ENCODE measurements at regions of chrX and their contacts with region 1.

Region 1: GRCh38 chrX:1453951-1454785 is 1.5 kb upstream of the ASMTL start:
- DNase-seq: peak; percentile 91
- H3K4me3 ChIP-seq: peak overlapping the region; percentile 38 to 86 (median 64)
- H3K27ac ChIP-seq: peak overlapping the region; percentile 91 to 97 (median 96)
- H3K4me1 ChIP-seq: peaks cover 0 to 33% (median 27%) of the 10 kb centered on the region in 4 donors
- H3K27me3 ChIP-seq: no peaks in the 10 kb centered on the region
- CTCF ChIP-seq: peak; percentile 84 to 98 (median 93)
- EP300 ChIP-seq: no peak
- POLR2A ChIP-seq: no peak

Region 2: DNA sequence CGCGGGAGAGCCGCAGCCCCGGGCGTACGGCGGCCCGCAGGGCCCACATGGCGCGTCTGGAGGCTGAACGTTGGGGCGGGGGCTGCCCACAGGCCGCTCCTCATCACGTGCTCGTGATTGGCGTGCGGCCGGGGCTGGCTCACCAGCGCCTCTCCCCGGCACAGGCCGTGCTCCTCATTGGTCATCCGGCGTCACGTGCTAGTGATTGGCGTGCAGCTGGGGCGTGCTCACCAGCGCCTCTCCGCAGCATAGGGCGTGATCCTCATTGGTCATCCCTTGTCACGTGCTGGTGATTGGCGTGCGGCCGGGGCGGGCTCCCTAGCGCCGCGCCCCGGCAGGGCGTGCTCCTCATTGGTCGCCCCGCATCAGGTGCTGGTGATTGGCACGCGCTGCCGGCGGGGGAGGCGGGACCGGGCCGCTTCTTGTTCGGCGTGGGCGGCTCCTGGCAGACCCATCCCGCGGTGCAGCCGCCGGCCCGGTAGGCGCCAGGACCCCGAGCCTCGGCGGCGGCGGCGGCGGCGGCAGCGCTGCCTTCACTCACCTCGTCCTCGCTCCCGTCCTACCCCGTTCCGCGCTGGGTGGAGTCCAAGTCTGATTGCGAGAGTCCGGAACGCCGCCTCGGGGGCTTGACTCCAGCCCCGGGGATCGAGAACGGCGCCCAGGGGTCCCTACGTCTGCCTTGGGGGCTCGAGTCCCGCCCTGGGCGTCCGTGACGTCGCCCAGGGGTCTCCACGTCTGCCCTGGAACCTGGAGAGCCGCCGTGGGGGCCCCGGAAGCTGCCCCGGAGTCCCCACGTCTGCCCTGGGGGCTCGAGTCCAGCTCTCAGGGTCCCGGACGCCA is 1135.2 kb before region 1 on chrX and contains the start of gene GTPBP6:
- intact Hi-C with region 1: loop called (anchors 5 kb)
- DNase-seq: peak; percentile 100
- H3K4me3 ChIP-seq: peak within 1 kb of the TSS; percentile 71 to 91 (median 83)
- H3K27ac ChIP-seq: peak within 1 kb of the TSS; percentile 90 to 98 (median 96)
- H3K4me1 ChIP-seq: peaks cover 0 to 38% (median 27%) of the 10 kb centered on the region in 4 donors
- H3K27me3 ChIP-seq: peaks cover 2 to 14% (median 13%) of the 10 kb centered on the region in 3 donors
- CTCF ChIP-seq: no peak
- EP300 ChIP-seq: no peak
- POLR2A ChIP-seq: peak; percentile 20 to 30
- total RNA-seq, gene GTPBP6: 22.4 to 40.3 (median 30.9) TPM

Region 3: DNA sequence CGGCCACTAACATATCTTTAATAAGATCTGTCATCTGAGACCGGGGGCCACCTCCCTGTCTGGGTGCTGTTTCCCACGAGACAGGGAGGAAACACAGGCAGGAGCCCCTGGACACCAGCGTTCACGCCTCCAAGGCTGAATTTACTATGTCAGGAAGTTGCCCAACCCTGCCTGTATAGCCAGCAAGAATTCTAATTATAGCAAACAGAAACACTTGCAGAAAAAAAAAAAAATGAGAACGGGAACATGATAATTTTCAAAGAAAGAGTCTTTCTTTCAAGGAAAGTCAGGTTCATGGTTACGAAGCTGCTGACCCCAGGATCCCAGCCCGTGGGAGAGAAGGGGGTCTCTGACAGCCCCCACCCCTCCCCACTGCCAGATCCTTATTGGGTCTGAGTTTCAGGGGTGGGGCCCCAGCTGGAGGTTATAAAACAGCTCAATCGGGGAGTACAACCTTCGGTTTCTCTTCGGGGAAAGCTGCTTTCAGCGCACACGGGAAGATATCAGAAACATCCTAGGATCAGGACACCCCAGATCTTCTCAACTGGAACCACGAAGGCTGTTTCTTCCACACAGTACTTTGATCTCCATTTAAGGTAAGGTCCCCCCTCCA is 117.7 kb before region 1 on chrX and contains the start of gene IL3RA:
- intact Hi-C with region 1: no loop called
- DNase-seq: peak; percentile 78
- H3K4me3 ChIP-seq: peak within 1 kb of the TSS; percentile 34 to 60 (median 51)
- H3K27ac ChIP-seq: peak within 1 kb of the TSS; percentile 63 to 76 (median 73)
- H3K4me1 ChIP-seq: no peaks in the 10 kb centered on the region
- H3K27me3 ChIP-seq: no peaks in the 10 kb centered on the region
- CTCF ChIP-seq: no peak
- EP300 ChIP-seq: peak in 1 of 4 donors; percentile 18
- POLR2A ChIP-seq: no peak
- total RNA-seq, gene IL3RA: 2.8 to 8.3 (median 6.2) TPM

Region 4: GRCh38 chrX:1391707-1392375 is 62.3 kb before region 1 on chrX and contains the start of gene SLC25A6:
- intact Hi-C with region 1: loop called (anchors 1 kb)
- DNase-seq: peak; percentile 99
- H3K4me3 ChIP-seq: peak within 1 kb of the TSS; percentile 81 to 100 (median 98)
- H3K27ac ChIP-seq: peak within 1 kb of the TSS; percentile 97 to 100 (median 99)
- H3K4me1 ChIP-seq: peaks cover 0 to 63% (median 61%) of the 10 kb centered on the region in 4 donors
- H3K27me3 ChIP-seq: no peaks in the 10 kb centered on the region
- CTCF ChIP-seq: peak in 1 of 4 experiments; percentile 25
- EP300 ChIP-seq: no peak
- POLR2A ChIP-seq: peak; percentile 79 to 90
- total RNA-seq, gene SLC25A6: 329 to 493 (median 469) TPM

Region 5: DNA sequence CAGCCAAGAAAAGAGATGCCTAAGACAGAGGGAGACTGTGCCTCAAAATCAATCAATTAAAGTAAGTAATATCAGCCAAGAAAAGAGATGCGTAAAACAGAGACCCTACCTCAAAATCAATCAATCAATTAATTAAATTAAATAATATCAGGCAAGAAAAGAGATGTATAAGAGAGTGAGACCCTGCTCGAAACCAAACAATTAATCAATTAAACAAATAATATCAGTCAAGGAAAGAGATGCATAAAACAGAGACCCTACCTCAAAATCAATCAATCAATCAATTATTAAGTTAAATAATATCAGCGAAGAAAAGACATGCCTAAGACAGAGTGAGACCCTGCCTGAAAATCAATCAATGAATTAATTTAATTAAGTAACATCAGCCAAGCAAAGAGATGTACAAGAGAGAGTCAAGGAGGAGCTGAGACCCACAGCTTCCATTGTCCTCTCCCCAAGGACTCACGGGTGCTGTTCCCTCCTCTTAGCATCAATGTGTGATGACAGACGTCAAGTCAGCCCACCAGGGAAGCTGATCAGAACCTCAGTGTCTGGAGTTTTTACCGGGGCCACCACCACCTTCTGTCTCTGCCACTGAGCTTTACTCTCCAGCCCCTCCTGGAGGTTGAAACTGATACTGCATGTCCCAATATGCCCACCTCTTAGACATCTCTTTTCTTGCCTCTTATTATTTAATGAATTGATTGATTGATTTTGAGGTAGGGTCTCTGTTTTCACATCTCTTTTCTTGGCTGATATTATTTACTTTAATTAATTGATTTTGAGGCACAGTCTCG is 126.8 kb after region 1 on chrX:
- intact Hi-C with region 1: no loop called
- DNase-seq: no peak
- H3K4me3 ChIP-seq: no peak overlapping the region
- H3K27ac ChIP-seq: no peak overlapping the region
- H3K4me1 ChIP-seq: no peaks in the 10 kb centered on the region
- H3K27me3 ChIP-seq: peaks cover 0 to 8% (median 0%) of the 10 kb centered on the region in 3 donors
- CTCF ChIP-seq: peak; percentile 31 to 71 (median 64)
- EP300 ChIP-seq: no peak
- POLR2A ChIP-seq: no peak

Region 6: DNA sequence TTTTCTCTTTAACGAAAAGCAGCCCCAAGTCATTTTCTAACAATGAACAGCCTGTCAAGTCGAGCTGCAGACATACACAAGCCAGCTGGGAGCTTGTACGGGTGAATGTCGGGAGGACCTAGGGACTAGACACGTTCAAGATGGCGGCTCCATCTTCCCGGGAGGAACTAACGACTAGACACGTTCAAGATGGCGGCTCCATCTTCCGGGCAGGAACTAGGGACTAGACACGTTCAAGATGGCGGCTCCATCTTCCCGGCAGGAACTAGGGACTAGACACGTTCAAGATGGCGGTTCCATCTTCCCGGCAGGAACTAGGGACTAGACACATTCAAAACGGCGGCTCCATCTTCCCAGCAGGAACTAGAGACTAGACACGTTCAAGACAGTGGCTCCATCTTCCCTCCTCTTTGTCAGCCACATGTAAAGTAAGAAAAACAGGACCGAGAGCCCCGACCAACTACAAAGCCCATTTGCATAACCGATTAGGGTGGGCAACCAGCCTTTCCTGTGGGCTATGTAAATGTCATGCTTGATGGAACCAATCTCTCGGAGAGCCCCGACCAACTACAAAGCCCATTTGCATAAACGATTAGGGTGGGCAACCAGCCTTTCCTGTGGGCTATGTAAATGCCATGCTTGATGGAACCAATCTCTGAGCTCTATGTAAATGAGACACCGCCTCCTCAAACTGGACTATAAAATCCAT is 871.1 kb after region 1 on chrX:
- intact Hi-C with region 1: loop called (anchors 5 kb)
- DNase-seq: peak; percentile 96
- H3K4me3 ChIP-seq: peak overlapping the region in 3 of 4 donors; percentile 30 to 52 (median 39)
- H3K27ac ChIP-seq: peak overlapping the region; percentile 10 to 75 (median 67)
- H3K4me1 ChIP-seq: peaks cover 0 to 9% (median 8%) of the 10 kb centered on the region in 4 donors
- H3K27me3 ChIP-seq: no peaks in the 10 kb centered on the region
- CTCF ChIP-seq: no peak
- EP300 ChIP-seq: no peak
- POLR2A ChIP-seq: no peak

Region 7: DNA sequence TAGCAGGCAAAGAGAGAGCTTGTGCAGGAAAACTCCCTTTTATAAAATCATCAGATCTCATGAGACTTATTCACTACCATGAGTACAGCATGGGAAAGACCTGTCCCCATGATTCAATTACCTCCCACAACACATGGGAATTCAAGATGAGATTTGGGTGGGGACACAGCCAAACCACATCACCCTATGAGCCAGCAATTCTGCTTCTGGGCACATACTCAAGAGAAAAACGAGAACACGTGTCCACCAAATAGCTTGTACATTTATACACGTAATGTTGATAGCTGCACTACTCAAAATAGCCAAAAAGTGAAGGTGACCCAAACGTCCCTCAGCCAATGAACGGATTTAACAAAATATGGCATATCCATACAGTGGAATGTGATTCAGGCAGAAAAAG is 1141.1 kb after region 1 on chrX:
- intact Hi-C with region 1: loop called (anchors 1 kb)
- DNase-seq: no peak
- H3K4me3 ChIP-seq: no peak overlapping the region
- H3K27ac ChIP-seq: no peak overlapping the region
- H3K4me1 ChIP-seq: peaks cover 0 to 4% (median 0%) of the 10 kb centered on the region in 4 donors
- H3K27me3 ChIP-seq: no peaks in the 10 kb centered on the region
- CTCF ChIP-seq: no peak
- EP300 ChIP-seq: no peak
- POLR2A ChIP-seq: no peak

Region 8: DNA sequence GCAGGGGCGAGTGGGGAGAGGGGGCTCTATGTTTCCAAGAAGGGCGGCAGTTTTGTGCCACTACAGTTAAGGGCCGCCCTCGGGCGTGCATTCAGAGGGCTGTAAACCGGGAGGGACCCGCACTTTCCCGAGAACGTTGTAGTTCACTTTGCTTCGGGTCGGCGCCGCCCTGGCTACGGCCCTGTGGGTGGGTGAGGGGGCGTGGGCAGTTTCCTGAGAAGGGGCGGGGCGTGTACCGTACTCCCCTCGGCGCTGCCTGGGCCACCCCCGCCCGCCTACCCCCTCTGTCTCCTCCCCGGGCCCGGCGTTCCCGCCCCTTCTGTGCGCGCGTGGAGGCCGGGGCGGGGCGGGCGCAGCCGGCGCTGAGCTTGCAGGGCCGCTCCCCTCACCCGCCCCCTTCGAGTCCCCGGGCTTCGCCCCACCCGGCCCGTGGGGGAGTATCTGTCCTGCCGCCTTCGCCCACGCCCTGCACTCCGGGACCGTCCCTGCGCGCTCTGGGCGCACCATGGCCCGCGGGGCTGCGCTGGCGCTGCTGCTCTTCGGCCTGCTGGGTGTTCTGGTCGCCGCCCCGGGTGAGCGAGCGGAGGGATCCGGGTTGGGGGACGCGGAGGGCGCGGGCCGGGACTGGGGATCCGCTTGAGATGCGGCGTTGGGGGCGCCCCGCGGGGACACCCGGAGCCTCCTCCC is 1236.8 kb after region 1 on chrX and contains the start of gene CD99:
- intact Hi-C with region 1: loop called (anchors 5 kb)
- DNase-seq: peak; percentile 95
- H3K4me3 ChIP-seq: peak within 1 kb of the TSS; percentile 75 to 99 (median 93)
- H3K27ac ChIP-seq: peak within 1 kb of the TSS; percentile 82 to 97 (median 90)
- H3K4me1 ChIP-seq: peaks cover 0 to 48% (median 38%) of the 10 kb centered on the region in 4 donors
- H3K27me3 ChIP-seq: no peaks in the 10 kb centered on the region
- CTCF ChIP-seq: no peak
- EP300 ChIP-seq: no peak
- POLR2A ChIP-seq: peak; percentile 50 to 78
- total RNA-seq, gene CD99: 197 to 552 (median 326) TPM